Posterior cingulate gyrus (tissue), 11 donors: ENCODE measurements at regions of chr5 and their contacts with region 1.

Region 1: GRCh38 chr5:493119-493701 is 31.0 kb downstream of the SLC9A3 start:
- DNase-seq: no peak

Region 2: GRCh38 chr5:147751-148150 is 345.5 kb before region 1 on chr5:
- intact Hi-C with region 1: no loop called
- DNase-seq: no peak

Region 3: GRCh38 chr5:442335-443238 is 50.6 kb before region 1 on chr5 and contains the start of gene EXOC3:
- intact Hi-C with region 1: no loop called
- DNase-seq: peak; percentile 61 to 97 (median 77)

Region 4: DNA sequence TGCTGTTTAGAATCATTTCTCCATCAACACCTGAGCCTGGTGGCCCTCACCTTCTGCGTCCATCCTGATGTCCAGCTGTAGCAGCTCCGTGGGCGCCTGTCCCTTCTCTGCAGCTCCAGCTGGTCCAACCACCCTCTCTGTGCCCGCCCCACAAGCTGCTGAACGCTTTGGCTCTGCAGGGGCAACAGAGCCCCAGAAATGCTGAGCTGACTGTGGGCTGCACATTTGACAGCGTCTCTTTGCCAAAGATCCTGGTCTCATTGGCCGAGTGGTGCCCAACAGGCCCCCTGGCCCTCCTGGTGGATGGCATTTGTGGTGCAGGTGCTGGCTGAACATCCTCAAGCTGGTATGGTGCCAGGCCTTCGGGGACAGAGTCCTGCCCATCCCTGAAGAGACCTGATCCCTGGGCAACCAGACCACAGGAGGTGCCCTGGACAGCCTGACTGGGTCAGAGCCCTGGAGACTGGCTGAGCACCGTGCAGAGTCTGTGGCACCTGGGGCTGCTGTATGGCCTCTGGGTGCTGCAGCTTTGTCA is 93.6 kb after region 1 on chr5:
- intact Hi-C with region 1: loop called (anchors 10 kb)
- DNase-seq: no peak

Region 5: DNA sequence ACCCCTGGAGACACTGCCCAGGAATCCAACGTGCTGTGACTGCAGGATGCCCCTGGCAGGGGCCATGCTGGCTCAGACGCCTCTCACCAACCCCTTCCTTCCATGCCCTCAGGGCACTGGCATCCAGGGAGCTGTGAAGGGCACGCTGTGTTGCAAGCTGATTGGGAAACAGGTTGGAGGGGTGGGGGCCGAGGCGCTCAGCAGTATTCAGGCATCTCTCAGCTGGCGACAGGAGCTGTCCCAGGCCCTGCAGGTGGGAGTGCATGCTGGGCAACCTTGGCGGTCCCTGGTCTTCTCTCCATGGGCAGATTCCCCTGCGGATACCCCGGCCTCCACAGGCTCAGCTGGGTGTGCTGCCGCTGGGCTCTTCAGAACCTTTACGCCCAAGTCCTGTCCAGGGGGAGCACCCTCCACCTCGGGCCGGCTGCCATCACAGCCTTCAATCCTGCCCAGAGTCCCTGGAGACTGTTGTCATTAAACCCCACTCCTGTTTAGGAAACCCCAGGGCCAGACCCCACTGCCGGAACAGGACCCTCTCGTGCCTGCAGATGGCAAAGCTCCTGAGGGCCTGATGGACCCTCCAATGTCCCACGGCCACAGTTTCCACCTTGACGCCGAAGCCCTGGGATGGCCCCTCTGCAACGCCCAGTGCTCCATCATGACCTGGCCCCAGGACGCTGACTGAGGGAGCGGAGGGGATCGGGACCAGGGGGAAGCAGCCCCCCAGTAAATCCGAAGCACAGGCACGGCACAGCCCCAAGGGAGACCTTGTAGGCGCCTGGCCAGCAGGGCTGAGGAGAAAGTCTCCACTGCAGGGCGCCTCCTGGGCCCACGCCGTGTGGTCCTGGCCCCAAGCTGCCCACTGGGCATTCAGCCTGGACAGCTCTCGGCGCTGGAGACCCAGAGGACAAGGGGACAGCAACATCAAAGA is 190.6 kb after region 1 on chr5:
- intact Hi-C with region 1: no loop called
- DNase-seq: peak in 8 of 10 donors; percentile 9 to 79 (median 16)

Region 6: GRCh38 chr5:1874771-1875220 is 1381.6 kb after region 1 on chr5:
- intact Hi-C with region 1: no loop called
- DNase-seq: no peak